ENCODE measurements at regions of chr2 and their contacts with region 1.

Region 1: GRCh38 chr2:27322766-27323595 is at the start of gene MPV17:
- DNase-seq: peak; percentile 65 to 87 (median 82)
- ATAC-seq: peak; percentile 98
- H3K4me3 ChIP-seq: peak within 1 kb of the TSS; percentile 99
- H3K4me3 Mint-ChIP-seq: peak within 1 kb of the TSS; percentile 91 to 100 (median 99)
- H3K27ac ChIP-seq: peak within 1 kb of the TSS; percentile 95
- H3K27ac Mint-ChIP-seq: peak within 1 kb of the TSS; percentile 93 to 100 (median 99)
- H3K4me1 ChIP-seq: peaks cover 17 to 22% of the 10 kb centered on the region in 2 donors
- H3K4me1 Mint-ChIP-seq: peaks cover 14 to 30% (median 23%) of the 10 kb centered on the region in 7 donors
- H3K27me3 ChIP-seq: no peaks in the 10 kb centered on the region
- H3K27me3 Mint-ChIP-seq: no peaks in the 10 kb centered on the region
- total RNA-seq, gene MPV17: 55.7 to 119 (median 94.4) TPM

Region 2: DNA sequence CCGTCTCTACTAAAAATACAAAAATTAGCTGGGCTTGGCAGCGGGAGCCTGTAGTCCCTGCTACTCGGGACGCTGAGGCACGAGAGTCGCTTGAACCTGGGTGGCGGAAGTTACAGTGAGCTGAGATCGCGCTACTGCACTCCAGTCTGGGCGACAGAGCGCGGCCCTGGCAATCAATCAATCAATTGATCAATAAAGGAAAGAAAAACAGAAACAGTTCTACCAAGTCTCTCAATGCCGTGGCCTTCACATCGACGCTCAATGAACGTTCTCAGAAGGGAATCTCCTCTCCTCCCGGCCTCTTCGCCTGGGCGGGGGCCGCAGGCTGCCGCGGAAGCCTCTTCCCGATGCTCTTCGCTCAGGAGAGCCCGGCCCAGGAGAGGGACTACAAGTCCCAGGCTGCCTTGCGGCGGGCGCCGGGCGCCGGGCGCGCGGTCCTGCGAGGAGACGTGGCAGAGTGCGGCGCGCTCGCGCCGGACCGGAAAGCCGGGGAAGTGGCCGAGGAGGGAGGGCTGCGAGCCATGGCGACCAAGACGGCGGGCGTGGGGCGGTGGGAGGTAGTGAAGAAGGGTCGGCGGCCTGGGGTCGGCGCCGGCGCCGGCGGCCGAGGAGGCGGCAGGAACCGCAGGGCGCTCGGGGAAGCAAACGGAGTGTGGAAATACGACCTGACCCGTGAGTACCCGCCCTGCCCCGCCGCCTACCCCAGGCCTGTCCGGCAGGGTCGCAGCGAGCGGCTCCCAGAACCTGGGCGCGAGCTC is 290.3 kb before region 1 on chr2 and contains the start of gene TMEM214:
- CTCF ChIA-PET with region 1: no interaction called
- POLR2A ChIA-PET with region 1: no interaction called
- intact Hi-C with region 1: no loop called
- DNase-seq: peak; percentile 54 to 88 (median 63)
- ATAC-seq: peak; percentile 97
- H3K4me3 ChIP-seq: peak within 1 kb of the TSS; percentile 99
- H3K4me3 Mint-ChIP-seq: peak within 1 kb of the TSS; percentile 91 to 97 (median 93)
- H3K27ac ChIP-seq: peak within 1 kb of the TSS; percentile 87
- H3K27ac Mint-ChIP-seq: peak within 1 kb of the TSS; percentile 84 to 95 (median 91)
- H3K4me1 ChIP-seq: peaks cover 11 to 19% of the 10 kb centered on the region in 2 donors
- H3K4me1 Mint-ChIP-seq: peaks cover 24 to 63% (median 41%) of the 10 kb centered on the region in 7 donors
- H3K27me3 ChIP-seq: no peaks in the 10 kb centered on the region
- H3K27me3 Mint-ChIP-seq: no peaks in the 10 kb centered on the region
- total RNA-seq, gene TMEM214: 36.7 to 114 (median 67.5) TPM

Region 3: GRCh38 chr2:27211829-27212627 is 111.0 kb before region 1 on chr2 and contains the starts of genes ATRAID and SLC5A6:
- CTCF ChIA-PET with region 1: no interaction called
- POLR2A ChIA-PET with region 1: interaction called, 5 read pairs
- intact Hi-C with region 1: loop called (anchors 1 kb)
- DNase-seq: peak; percentile 86 to 93 (median 92)
- ATAC-seq: peak; percentile 93
- H3K4me3 ChIP-seq: peak within 1 kb of the TSS; percentile 91
- H3K4me3 Mint-ChIP-seq: peak within 1 kb of the TSS; percentile 89 to 100 (median 99)
- H3K27ac ChIP-seq: peak within 1 kb of the TSS; percentile 100
- H3K27ac Mint-ChIP-seq: peak within 1 kb of the TSS; percentile 99 to 100 (median 100)
- H3K4me1 ChIP-seq: peaks cover 14 to 17% of the 10 kb centered on the region in 2 donors
- H3K4me1 Mint-ChIP-seq: peaks cover 18 to 49% (median 42%) of the 10 kb centered on the region in 7 donors
- H3K27me3 ChIP-seq: no peaks in the 10 kb centered on the region
- H3K27me3 Mint-ChIP-seq: no peaks in the 10 kb centered on the region
- total RNA-seq, gene ATRAID: 71.0 to 113 (median 90.7) TPM
- total RNA-seq, gene SLC5A6: 25.6 to 203 (median 44.3) TPM

Region 4: DNA sequence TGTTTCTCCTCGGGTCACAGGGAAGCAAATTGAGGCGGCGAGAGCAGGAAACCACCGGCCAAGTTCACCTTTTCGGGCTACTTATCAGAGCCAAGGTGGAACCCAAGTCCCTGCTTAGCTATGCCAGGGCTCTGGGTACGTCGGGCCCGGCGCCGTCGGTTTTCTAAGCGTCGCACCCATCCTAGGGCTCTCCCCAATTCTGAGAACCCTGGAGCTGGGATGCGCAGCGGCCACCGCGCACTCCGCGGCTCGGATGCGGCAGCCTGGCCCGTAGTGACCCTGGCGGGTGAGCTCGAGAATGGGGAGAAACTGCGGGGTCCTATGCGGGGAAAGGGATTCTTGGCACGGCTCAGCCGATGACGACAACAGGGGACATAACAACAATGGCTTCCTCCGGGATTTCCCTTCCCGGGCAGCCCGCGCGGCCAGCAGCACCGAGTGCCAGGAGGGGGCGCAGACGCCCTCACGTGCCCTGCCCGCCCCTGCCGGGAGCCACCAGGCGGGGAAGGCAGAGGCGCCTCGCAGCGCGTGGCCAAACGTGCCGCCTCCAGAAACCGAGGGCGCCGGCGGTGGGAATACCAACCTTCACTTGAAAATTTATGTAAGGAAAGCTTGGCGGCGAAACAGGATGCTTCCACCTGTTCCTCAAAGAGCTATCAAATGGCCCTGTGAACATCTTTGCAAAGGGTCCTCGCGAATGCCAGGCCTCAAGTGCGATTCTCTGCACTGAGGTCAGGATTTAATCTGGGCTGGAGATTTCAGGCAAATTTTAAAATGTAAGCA is 58.0 kb before region 1 on chr2:
- CTCF ChIA-PET with region 1: no interaction called
- POLR2A ChIA-PET with region 1: no interaction called
- intact Hi-C with region 1: loop called in 1 of 2 experiments (anchors 2 kb)
- DNase-seq: peak in 8 of 9 donors; percentile 39 to 63 (median 46)
- ATAC-seq: peak; percentile 85
- H3K4me3 ChIP-seq: peak overlapping the region; percentile 59
- H3K4me3 Mint-ChIP-seq: peak overlapping the region in 9 of 10 donors; percentile 59 to 97 (median 85)
- H3K27ac ChIP-seq: no peak overlapping the region
- H3K27ac Mint-ChIP-seq: peak overlapping the region in 2 of 9 donors; percentile 2 to 38
- H3K4me1 ChIP-seq: peaks cover 8 to 23% of the 10 kb centered on the region in 2 donors
- H3K4me1 Mint-ChIP-seq: peaks cover 23 to 33% (median 29%) of the 10 kb centered on the region in 7 donors
- H3K27me3 ChIP-seq: peaks cover 6 to 18% of the 10 kb centered on the region in 2 donors
- H3K27me3 Mint-ChIP-seq: peaks cover 34 to 47% (median 40%) of the 10 kb centered on the region in 5 donors

Region 5: DNA sequence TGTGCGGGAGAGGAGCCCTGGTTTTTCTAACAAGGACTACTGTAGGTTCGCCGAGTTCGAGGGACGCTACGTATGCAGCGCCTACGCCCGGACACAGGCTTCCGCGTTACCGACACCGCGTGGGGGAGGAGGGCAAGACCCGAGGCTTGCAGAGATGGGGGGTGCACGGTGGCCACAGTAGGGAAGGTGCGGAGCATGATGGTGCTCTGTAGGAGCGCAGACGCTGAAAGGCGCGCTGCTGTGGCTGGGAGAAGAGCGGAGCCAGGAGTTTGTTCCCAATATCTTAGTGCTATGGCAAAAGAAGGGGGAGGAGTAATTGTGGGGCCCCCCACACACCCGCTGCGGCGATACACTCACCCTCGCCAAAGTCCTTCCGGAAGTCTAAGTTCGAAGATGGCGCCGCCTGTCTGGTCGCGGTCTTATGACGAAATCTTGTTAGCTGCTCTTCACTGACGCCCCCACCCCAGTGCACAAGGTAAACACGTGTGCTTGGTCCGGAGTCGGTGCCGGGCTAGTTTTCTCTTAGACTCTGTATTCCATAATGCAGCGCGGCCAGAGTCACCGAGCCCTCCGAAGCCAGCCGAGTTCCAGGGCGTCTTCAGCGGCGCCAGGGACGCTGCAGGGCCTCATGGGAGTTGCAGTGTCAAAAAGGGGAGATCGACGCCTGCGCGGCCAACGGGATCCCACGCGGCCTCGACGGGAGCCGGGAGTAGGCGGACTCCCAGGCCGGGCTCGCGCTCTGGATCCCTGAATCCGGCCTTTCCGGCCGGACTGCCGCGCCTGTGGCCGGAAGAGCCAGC is 33.6 kb after region 1 on chr2 and contains the start of gene GTF3C2:
- CTCF ChIA-PET with region 1: no interaction called
- POLR2A ChIA-PET with region 1: interaction called, 26 read pairs
- intact Hi-C with region 1: loop called (anchors 1 kb)
- DNase-seq: peak; percentile 76 to 94 (median 92)
- ATAC-seq: peak; percentile 85
- H3K4me3 ChIP-seq: peak within 1 kb of the TSS; percentile 96
- H3K4me3 Mint-ChIP-seq: peak within 1 kb of the TSS; percentile 95 to 100 (median 98)
- H3K27ac ChIP-seq: peak within 1 kb of the TSS; percentile 91
- H3K27ac Mint-ChIP-seq: peak within 1 kb of the TSS; percentile 96 to 100 (median 99)
- H3K4me1 ChIP-seq: peaks cover 24 to 34% of the 10 kb centered on the region in 2 donors
- H3K4me1 Mint-ChIP-seq: peaks cover 38 to 63% (median 56%) of the 10 kb centered on the region in 7 donors
- H3K27me3 ChIP-seq: no peaks in the 10 kb centered on the region
- H3K27me3 Mint-ChIP-seq: no peaks in the 10 kb centered on the region
- total RNA-seq, gene GTF3C2: 68.0 to 106 (median 78.3) TPM

Region 6: GRCh38 chr2:27489498-27490397 is 166.8 kb after region 1 on chr2 and contains the start of gene IFT172:
- CTCF ChIA-PET with region 1: no interaction called
- POLR2A ChIA-PET with region 1: no interaction called
- intact Hi-C with region 1: loop called in 1 of 2 experiments (anchors 1 kb)
- DNase-seq: peak; percentile 90 to 100 (median 99)
- ATAC-seq: peak; percentile 96
- H3K4me3 ChIP-seq: peak within 1 kb of the TSS; percentile 63
- H3K4me3 Mint-ChIP-seq: peak within 1 kb of the TSS; percentile 78 to 92 (median 84)
- H3K27ac ChIP-seq: peak within 1 kb of the TSS; percentile 80
- H3K27ac Mint-ChIP-seq: peak within 1 kb of the TSS; percentile 82 to 99 (median 98)
- H3K4me1 ChIP-seq: peaks cover 11 to 16% of the 10 kb centered on the region in 2 donors
- H3K4me1 Mint-ChIP-seq: peaks cover 8 to 29% (median 19%) of the 10 kb centered on the region in 7 donors
- H3K27me3 ChIP-seq: peaks cover 0 to 7% of the 10 kb centered on the region in 2 donors
- H3K27me3 Mint-ChIP-seq: peaks cover 13 to 20% (median 17%) of the 10 kb centered on the region in 5 donors
- total RNA-seq, gene IFT172: 12.3 to 35.8 (median 22.2) TPM